ENCODE measurements at regions of chr6 and their contacts with region 1.

Region 1: DNA sequence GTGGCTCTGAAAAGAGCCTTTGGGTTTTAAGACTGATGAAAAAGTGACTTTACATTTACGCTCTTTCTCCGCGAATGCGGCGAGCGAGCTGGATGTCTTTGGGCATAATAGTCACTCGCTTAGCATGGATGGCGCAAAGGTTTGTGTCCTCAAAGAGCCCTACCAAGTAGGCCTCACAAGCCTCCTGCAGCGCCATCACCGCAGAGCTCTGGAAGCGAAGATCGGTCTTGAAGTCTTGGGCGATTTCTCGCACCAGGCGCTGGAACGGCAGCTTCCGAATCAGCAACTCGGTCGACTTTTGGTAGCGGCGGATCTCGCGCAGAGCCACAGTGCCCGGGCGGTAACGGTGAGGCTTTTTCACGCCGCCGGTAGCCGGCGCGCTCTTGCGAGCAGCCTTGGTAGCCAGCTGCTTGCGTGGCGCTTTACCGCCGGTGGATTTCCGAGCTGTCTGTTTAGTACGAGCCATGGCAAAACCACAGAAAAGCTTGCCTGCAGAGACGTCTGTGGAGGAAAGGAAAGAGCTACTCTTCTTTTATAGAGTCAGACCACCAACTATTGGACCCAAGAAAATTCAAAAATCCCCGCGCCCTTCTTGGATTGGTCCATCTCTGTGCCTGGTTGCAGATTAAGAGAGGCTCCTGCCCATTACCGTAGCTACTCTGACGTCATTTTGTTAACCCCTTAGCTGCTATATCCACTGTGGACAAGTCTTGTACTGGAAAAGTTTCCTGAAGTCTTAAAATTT is 55.5 kb upstream of the HFE start:
- DNase-seq: peak; percentile 89
- CTCF ChIP-seq: peak; percentile 9

Region 2: DNA sequence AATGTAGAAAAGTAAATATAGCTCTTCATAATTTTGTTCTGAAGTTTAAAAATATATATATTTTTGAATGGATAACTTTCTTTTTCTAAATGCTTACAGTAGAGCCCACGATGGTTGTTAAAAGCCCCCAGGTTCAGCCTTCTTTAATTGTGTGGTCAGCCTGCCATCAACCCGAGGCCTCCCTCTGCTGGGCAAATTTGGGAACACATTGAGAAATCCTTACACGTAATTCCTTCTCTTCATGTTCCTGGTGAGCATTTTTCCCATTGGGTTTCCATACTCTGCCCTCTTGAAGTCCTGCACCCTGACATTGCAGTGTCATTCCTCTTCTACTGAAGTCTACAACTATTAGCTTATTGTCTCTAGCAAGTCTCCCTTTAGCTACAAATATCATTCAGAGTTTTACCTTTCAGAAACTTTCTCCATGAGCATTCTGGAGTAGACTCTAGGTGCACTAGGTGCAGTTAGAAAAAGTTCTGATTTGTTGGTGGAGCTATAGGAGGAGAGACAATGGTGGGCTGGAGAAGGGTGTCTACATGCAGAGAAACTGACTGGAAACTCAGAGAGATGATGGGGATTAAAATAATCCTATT is 28.6 kb before region 1 on chr6:
- CTCF ChIA-PET with region 1: interaction called, 163 read pairs
- POLR2A ChIA-PET with region 1: no interaction called
- DNase-seq: peak; percentile 63
- CTCF ChIP-seq: peak; percentile 82

Region 3: DNA sequence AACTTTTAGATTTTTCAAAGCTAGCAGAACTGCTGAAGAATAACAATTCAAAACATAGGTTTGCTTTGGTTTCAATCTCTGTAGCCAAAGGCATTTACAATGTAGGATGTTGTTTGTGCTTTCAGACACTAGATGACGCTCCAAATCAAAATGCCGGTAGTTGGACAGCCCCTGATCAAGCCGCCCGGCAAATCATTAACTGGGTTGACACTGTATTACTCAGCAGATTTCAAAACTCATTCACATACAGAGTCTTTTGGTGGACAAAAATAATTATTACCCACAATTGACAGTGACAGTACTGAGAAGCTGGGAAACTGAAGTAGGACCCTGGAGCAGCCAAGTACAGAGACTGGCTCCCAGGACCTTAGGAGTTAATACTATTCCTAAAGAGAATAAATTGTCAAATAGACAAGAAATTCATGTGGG is 34.2 kb after region 1 on chr6:
- CTCF ChIA-PET with region 1: interaction called, 32 read pairs
- POLR2A ChIA-PET with region 1: no interaction called
- DNase-seq: peak; percentile 79
- CTCF ChIP-seq: peak; percentile 71

Region 4: GRCh38 chr6:26122793-26123674 is 91.3 kb after region 1 on chr6:
- CTCF ChIA-PET with region 1: interaction called, 7 read pairs
- POLR2A ChIA-PET with region 1: interaction called, 39 read pairs
- DNase-seq: peak; percentile 83
- CTCF ChIP-seq: no peak

Region 5: DNA sequence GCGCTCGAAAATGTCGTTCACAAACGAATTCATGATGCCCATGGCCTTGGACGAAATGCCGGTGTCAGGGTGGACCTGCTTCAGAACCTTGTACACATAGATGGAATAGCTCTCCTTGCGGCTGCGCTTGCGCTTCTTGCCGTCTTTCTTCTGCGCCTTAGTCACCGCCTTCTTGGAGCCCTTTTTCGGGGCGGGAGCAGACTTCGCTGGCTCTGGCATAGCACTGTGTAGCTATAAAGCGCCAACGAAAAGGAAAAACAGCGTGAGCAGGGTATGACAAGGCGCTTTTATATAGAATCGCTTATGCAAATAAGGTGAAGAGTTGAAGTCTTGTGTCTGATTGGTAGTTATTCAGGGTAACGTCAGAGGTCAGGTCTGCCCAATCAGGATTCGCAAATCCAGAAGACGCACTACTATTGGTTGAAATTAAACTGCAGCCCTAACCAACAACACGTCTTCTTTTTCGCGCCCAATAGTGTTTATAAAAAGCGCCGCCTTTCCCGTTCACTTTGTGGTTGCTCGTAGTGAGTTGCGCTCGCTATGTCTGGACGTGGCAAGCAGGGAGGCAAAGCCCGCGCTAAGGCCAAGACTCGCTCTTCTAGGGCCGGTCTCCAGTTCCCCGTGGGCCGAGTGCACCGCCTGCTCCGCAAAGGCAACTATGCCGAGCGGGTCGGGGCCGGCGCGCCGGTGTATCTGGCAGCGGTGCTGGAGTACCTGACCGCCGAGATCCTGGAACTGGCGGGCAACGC is 1100.9 kb after region 1 on chr6:
- CTCF ChIA-PET with region 1: no interaction called
- POLR2A ChIA-PET with region 1: interaction called, 13 read pairs
- DNase-seq: peak; percentile 95
- CTCF ChIP-seq: no peak

Measured in GM10248 (cell line).